CD8-positive, alpha-beta memory T cell (primary cell): ENCODE measurements at regions of chr5 and their contacts with region 1.

Region 1: DNA sequence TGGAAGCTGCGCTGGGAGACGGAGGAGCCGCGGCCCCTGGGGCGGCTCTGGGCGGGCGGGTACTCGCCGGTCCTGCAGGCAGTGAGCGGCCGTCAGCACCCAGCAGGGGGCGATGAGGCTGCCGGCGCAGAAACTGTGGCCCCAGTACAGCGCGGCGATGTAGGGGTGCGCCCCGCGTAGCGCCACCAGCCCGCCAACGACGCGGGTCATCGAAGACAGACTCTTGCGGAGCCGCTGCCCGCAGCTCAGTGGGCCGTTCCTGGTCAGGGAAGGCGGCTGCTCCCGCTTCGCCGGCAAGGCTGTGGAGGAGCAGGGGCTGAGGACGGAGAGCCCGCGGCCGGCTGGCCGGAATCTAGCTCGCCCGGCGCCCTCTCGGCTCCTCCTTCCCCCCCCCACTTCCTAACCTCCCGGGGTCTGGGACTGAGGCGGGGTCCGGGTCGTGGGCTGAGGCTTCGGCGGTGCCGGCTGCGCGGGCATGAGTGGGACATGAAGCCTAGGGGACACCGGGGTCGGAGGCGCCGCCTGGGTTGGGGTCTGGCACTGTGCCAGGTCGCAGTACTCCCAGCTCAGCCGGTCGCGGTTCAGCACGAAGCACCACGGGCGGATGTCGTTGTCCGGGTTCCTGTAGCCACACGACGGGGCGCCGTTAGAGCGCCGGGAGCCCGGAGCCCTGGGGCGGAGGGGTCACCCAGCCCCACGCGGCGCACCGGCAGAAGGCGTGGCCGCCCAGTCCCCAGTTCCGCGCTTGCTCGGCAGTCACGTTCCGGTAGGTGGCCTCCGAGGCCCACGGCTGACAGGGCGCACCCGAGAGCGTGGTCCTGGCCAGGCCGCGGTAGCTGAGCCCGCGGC is 3.6 kb upstream of the PFN3 start:
- DNase-seq: peak; percentile 75 to 91 (median 82)
- H3K4me3 ChIP-seq: peak overlapping the region; percentile 69
- H3K4me3 Mint-ChIP-seq: peak overlapping the region; percentile 78 to 91 (median 84)
- H3K27ac ChIP-seq: peak overlapping the region; percentile 57
- H3K27ac Mint-ChIP-seq: peak overlapping the region in 7 of 8 donors; percentile 26 to 94 (median 83)
- H3K4me1 ChIP-seq: peaks cover 35% of the 10 kb centered on the region
- H3K4me1 Mint-ChIP-seq: peaks cover 26 to 42% (median 30%) of the 10 kb centered on the region in 3 donors
- H3K27me3 ChIP-seq: no peaks in the 10 kb centered on the region
- H3K27me3 Mint-ChIP-seq: peaks cover 0 to 11% of the 10 kb centered on the region in 2 donors

Region 2: GRCh38 chr5:177317959-177318377 is 86.0 kb before region 1 on chr5:
- CTCF ChIA-PET with region 1: interaction called, 55 read pairs
- POLR2A ChIA-PET with region 1: interaction called, 4 read pairs
- DNase-seq: peak; percentile 55 to 80 (median 63)
- H3K4me3 ChIP-seq: no peak overlapping the region
- H3K4me3 Mint-ChIP-seq: no peak overlapping the region
- H3K27ac ChIP-seq: no peak overlapping the region
- H3K27ac Mint-ChIP-seq: peak overlapping the region in 3 of 8 donors; percentile 5 to 48 (median 37)
- H3K4me1 ChIP-seq: peaks cover 6% of the 10 kb centered on the region
- H3K4me1 Mint-ChIP-seq: peaks cover 11 to 19% (median 19%) of the 10 kb centered on the region in 3 donors
- H3K27me3 ChIP-seq: no peaks in the 10 kb centered on the region
- H3K27me3 Mint-ChIP-seq: peaks cover 0 to 3% of the 10 kb centered on the region in 2 donors

Region 3: DNA sequence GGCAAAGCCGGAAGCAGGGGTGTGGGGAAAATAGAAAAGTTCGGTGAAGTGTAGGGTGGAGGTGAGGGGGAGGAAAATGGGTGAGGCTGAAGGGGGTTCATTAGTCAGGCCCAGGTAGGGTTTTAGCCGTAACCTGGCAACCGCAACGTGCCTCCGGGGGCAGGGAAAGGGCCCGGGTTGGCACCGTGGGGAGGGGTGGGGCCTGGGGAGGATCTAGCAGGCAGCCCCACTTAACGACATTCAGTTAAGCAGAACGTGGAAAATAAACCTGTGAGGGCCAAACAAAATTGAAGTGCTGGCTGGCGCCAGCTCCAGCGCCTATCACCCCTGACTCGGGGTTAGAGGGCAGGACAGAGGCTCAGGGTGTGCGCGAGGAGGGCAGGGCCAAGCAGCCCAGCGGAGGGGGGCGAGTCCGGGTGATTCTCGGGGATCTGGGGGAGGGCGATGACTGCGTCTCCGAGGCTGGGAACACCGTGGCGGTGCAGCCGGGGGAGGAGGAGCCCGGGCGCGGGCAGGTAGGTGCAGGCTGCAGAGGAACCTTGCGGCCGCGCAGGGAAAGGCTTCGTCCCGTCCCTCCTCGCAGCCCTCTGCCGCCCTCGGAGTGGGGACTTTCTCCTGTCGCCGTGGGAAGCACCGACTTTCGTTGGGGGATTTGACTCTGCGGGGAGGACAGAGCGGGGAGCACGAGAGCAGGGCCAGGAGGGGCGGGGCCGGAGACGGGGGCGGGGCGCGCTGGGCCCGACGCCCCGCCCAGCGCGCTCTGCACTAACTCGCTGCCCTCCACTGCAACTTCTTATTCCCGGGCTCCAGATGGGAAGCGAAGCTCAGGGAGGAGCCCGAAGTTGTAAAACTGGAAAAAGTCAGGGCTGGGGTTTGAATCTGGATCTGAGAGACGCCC is 41.2 kb before region 1 on chr5:
- CTCF ChIA-PET with region 1: interaction called, 64 read pairs
- POLR2A ChIA-PET with region 1: no interaction called
- DNase-seq: peak; percentile 59 to 78 (median 70)
- H3K4me3 ChIP-seq: peak overlapping the region; percentile 47
- H3K4me3 Mint-ChIP-seq: peak overlapping the region; percentile 73 to 95 (median 83)
- H3K27ac ChIP-seq: peak overlapping the region; percentile 57
- H3K27ac Mint-ChIP-seq: peak overlapping the region; percentile 75 to 97 (median 90)
- H3K4me1 ChIP-seq: peaks cover 72% of the 10 kb centered on the region
- H3K4me1 Mint-ChIP-seq: peaks cover 60 to 76% (median 64%) of the 10 kb centered on the region in 3 donors
- H3K27me3 ChIP-seq: no peaks in the 10 kb centered on the region
- H3K27me3 Mint-ChIP-seq: peaks cover 0 to 1% of the 10 kb centered on the region in 2 donors

Region 4: GRCh38 chr5:177390363-177391300 is 13.4 kb before region 1 on chr5:
- CTCF ChIA-PET with region 1: interaction called, 291 read pairs
- POLR2A ChIA-PET with region 1: interaction called, 42 read pairs
- DNase-seq: peak; percentile 76 to 90 (median 83)
- H3K4me3 ChIP-seq: no peak overlapping the region
- H3K4me3 Mint-ChIP-seq: peak overlapping the region; percentile 41 to 90 (median 65)
- H3K27ac ChIP-seq: peak overlapping the region; percentile 49
- H3K27ac Mint-ChIP-seq: peak overlapping the region; percentile 75 to 99 (median 93)
- H3K4me1 ChIP-seq: peaks cover 39% of the 10 kb centered on the region
- H3K4me1 Mint-ChIP-seq: peaks cover 35 to 39% (median 36%) of the 10 kb centered on the region in 3 donors
- H3K27me3 ChIP-seq: no peaks in the 10 kb centered on the region
- H3K27me3 Mint-ChIP-seq: no peaks in the 10 kb centered on the region

Region 5: GRCh38 chr5:177446200-177447065 is 42.4 kb after region 1 on chr5 and contains the start of gene PRR7:
- CTCF ChIA-PET with region 1: interaction called, 307 read pairs
- POLR2A ChIA-PET with region 1: interaction called, 112 read pairs
- DNase-seq: peak; percentile 58 to 85 (median 81)
- H3K4me3 ChIP-seq: peak within 1 kb of the TSS; percentile 56
- H3K4me3 Mint-ChIP-seq: peak within 1 kb of the TSS; percentile 74 to 92 (median 85)
- H3K27ac ChIP-seq: peak within 1 kb of the TSS; percentile 66
- H3K27ac Mint-ChIP-seq: peak within 1 kb of the TSS; percentile 83 to 100 (median 98)
- H3K4me1 ChIP-seq: peaks cover 32% of the 10 kb centered on the region
- H3K4me1 Mint-ChIP-seq: peaks cover 39 to 55% (median 40%) of the 10 kb centered on the region in 3 donors
- H3K27me3 ChIP-seq: no peaks in the 10 kb centered on the region
- H3K27me3 Mint-ChIP-seq: no peaks in the 10 kb centered on the region
- total RNA-seq, gene PRR7: 14.7 to 15.3 TPM

Region 6: DNA sequence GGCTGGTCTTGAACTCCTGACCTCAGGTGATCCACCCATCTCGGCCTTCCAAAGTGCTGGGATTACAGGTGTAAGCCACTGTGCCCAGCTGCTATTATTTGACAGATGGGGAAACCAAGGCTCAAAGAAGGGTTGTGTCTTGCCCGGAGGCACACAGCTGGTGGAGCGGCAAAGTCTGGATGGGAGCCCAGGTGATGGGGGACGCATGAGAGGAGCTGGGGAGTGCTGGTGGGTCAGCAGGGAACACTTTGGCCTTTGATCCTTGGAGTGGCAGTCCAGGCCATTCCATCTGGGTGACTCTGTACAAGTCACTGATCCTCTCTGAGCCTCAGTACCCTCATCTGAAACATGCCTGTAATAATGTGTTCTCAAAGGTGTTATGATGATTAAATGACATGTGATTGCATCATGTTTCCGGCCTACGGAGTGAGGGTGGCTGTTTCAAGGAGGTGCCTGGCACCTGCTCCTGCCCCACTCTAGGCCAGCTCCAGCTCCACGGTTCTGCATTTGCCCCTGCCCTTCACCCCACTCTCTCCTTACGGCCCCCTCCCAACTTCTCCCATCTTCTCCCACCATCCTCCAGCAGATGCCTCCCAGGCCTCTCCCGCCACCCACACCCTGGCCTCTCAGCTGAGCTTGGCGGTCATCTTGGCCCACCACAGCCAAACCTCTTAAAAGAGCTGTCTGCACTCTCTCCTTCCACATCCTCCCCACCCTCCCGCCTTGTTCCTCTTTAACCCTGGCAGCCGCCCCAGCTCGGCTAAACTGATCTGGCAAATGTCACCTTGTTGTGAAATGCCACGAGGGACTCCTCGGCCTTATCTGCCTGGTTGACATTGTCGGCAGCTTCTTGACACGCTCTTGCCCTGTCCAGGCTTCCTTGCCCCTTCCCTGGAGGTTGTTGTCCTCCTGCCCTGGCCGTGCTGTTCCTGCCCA is 75.0 kb after region 1 on chr5:
- CTCF ChIA-PET with region 1: interaction called, 17 read pairs
- POLR2A ChIA-PET with region 1: no interaction called
- DNase-seq: peak in 1 of 5 donors; percentile 50
- H3K4me3 ChIP-seq: no peak overlapping the region
- H3K4me3 Mint-ChIP-seq: peak overlapping the region in 3 of 7 donors; percentile 27 to 55 (median 52)
- H3K27ac ChIP-seq: no peak overlapping the region
- H3K27ac Mint-ChIP-seq: peak overlapping the region; percentile 74 to 93 (median 86)
- H3K4me1 ChIP-seq: peaks cover 23% of the 10 kb centered on the region
- H3K4me1 Mint-ChIP-seq: peaks cover 30 to 44% (median 30%) of the 10 kb centered on the region in 3 donors
- H3K27me3 ChIP-seq: no peaks in the 10 kb centered on the region
- H3K27me3 Mint-ChIP-seq: no peaks in the 10 kb centered on the region